Dorsolateral prefrontal cortex (tissue), 120 donors: ENCODE measurements at regions of chr10 and their contacts with region 1.

Region 1: DNA sequence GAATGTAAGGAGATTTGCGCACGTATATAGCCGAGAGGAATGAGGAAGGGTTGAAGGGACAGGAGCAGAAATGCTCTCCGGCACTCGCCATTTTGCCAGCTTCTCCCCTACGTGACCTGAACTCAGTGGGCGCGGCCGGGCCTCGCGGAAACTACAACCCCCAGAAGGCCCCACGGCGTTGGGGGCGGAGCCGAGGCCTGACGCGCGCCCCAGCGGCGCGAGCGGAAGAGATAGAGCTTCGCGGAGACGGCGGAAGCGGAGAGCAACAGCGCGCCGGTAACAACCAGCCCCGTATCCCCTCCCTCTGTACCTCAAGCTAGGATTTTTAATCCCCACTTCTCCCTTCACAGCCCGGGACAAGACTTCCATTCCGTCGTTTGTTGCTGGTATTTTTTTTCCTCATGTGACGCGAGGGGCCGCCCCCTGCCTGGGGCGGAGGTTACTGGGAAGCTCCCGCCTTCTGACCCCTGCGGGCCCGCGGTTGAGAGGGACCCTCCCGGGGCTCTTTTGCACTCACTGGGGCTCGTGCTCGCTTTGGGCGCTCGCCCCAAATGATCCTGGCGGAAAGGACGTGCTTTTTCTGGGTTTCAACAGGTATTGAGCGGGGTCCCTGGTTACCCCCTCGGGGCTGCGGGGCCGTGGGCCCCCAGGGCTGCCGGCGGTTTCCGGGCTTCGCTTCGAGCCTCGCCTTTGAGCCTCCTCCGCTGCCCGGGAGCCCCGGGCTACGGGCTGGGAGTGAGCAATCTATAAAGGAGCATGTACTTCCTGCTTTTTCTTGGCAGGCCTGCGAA is at the start of gene R3HCC1L:
- DNase-seq: peak; percentile 78 to 94 (median 88)
- H3K4me3 ChIP-seq: peak within 1 kb of the TSS; percentile 44 to 100 (median 94)
- H3K27ac ChIP-seq: peak within 1 kb of the TSS; percentile 11 to 94 (median 87)
- H3K27me3 ChIP-seq: no peaks in the 10 kb centered on the region
- CTCF ChIP-seq: peak in 34 of 56 donors; percentile 8 to 58 (median 33)
- total RNA-seq, gene R3HCC1L: 8.3 to 15.3 (median 11.1) TPM

Region 2: GRCh38 chr10:97736902-97737769 is 397.5 kb before region 1 on chr10 and contains the start of gene ZFYVE27:
- intact Hi-C with region 1: loop called in 1 of 2 experiments (anchors 5 kb)
- DNase-seq: peak; percentile 91 to 96 (median 94)
- H3K4me3 ChIP-seq: peak within 1 kb of the TSS; percentile 71 to 100 (median 95)
- H3K27ac ChIP-seq: peak within 1 kb of the TSS; percentile 6 to 94 (median 81)
- H3K27me3 ChIP-seq: no peaks in the 10 kb centered on the region
- CTCF ChIP-seq: peak in 32 of 56 donors; percentile 7 to 52 (median 30)
- total RNA-seq, gene ZFYVE27: 47.7 to 82.7 (median 64.5) TPM

Region 3: GRCh38 chr10:97914837-97915211 is 219.8 kb before region 1 on chr10:
- intact Hi-C with region 1: loop called in 1 of 2 experiments (anchors 5 kb)
- DNase-seq: peak; percentile 76 to 87 (median 82)
- H3K4me3 ChIP-seq: peak overlapping the region in 10 of 59 donors; percentile 3 to 50 (median 18)
- H3K27ac ChIP-seq: peak overlapping the region in 14 of 59 donors; percentile 1 to 87 (median 78)
- H3K27me3 ChIP-seq: no peaks in the 10 kb centered on the region
- CTCF ChIP-seq: peak; percentile 69 to 99 (median 96)